Heart right ventricle (tissue), 16 donors: ENCODE measurements at regions of chr2 and their contacts with region 1.

Region 1: GRCh38 chr2:83787189-83787588 is 671.9 kb downstream of the SUCLG1 start:
- DNase-seq: no peak
- ATAC-seq: no peak
- H3K4me3 ChIP-seq: no peak overlapping the region
- H3K27ac ChIP-seq: no peak overlapping the region
- H3K4me1 ChIP-seq: no peaks in the 10 kb centered on the region
- H3K27me3 ChIP-seq: no peaks in the 10 kb centered on the region
- CTCF ChIP-seq: no peak

Region 2: GRCh38 chr2:83186105-83186760 is 601.0 kb before region 1 on chr2:
- intact Hi-C with region 1: no loop called
- DNase-seq: peak in 1 of 2 donors; percentile 6
- ATAC-seq: peak in 6 of 8 donors; percentile 42 to 85 (median 56)
- H3K4me3 ChIP-seq: no peak overlapping the region
- H3K27ac ChIP-seq: peak overlapping the region in 4 of 10 donors; percentile 51 to 65 (median 60)
- H3K4me1 ChIP-seq: peaks cover 0 to 9% (median 0%) of the 10 kb centered on the region in 9 donors
- H3K27me3 ChIP-seq: no peaks in the 10 kb centered on the region
- CTCF ChIP-seq: no peak

Region 3: DNA sequence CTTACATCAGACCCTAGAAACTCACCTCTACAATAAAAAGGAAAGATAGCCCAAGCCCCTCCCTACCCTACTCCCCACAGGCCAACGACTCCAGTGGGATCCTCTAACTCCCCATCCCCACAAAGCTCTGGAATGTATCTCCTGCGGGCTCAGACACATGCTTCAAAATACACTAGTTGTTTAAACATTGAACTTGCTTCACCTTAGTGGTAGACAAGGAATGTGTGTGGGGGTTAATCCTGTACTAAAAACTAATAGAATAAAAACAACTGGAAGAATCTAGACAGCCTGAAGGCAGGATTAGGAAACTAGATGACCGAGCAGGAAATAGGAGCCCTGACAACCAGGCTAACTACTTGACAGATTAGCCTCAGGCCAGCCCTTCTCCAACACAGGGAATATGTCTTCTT is 460.4 kb after region 1 on chr2:
- intact Hi-C with region 1: loop called in 1 of 10 experiments (anchors 5 kb)
- DNase-seq: no peak
- ATAC-seq: no peak
- H3K4me3 ChIP-seq: no peak overlapping the region
- H3K27ac ChIP-seq: no peak overlapping the region
- H3K4me1 ChIP-seq: no peaks in the 10 kb centered on the region
- H3K27me3 ChIP-seq: peaks cover 0 to 6% (median 0%) of the 10 kb centered on the region in 7 donors
- CTCF ChIP-seq: no peak